Lower leg skin (tissue), 4 donors: ENCODE measurements at regions of chr12 and their contacts with region 1.

Region 1: GRCh38 chr12:62793256-62794217 is 141.4 kb downstream of the PPM1H start:
- DNase-seq: peak; percentile 88 to 97
- H3K4me3 ChIP-seq: no peak overlapping the region
- CTCF ChIP-seq: peak in 2 of 3 donors; percentile 64 to 89
- POLR2A ChIP-seq: no peak

Region 2: GRCh38 chr12:62438098-62438692 is 355.3 kb before region 1 on chr12:
- intact Hi-C with region 1: loop called (anchors 2 kb)
- DNase-seq: peak in 1 of 2 donors; percentile 44
- H3K4me3 ChIP-seq: no peak overlapping the region
- CTCF ChIP-seq: no peak
- POLR2A ChIP-seq: no peak